CD8-positive, alpha-beta T cell (primary cell): ENCODE measurements at regions of chr17 and their contacts with region 1.

Region 1: GRCh38 chr17:69819316-69820087 is 255.5 kb upstream of the KCNJ16 start:
- DNase-seq: no peak
- ATAC-seq: no peak
- H3K4me3 ChIP-seq: no peak overlapping the region
- H3K4me3 Mint-ChIP-seq: no peak overlapping the region
- H3K27ac ChIP-seq: no peak overlapping the region
- H3K27ac Mint-ChIP-seq: no peak overlapping the region
- H3K4me1 ChIP-seq: no peaks in the 10 kb centered on the region
- H3K4me1 Mint-ChIP-seq: no peaks in the 10 kb centered on the region
- H3K27me3 ChIP-seq: no peaks in the 10 kb centered on the region
- H3K27me3 Mint-ChIP-seq: peaks cover 1% of the 10 kb centered on the region
- CTCF ChIP-seq: no peak

Region 2: DNA sequence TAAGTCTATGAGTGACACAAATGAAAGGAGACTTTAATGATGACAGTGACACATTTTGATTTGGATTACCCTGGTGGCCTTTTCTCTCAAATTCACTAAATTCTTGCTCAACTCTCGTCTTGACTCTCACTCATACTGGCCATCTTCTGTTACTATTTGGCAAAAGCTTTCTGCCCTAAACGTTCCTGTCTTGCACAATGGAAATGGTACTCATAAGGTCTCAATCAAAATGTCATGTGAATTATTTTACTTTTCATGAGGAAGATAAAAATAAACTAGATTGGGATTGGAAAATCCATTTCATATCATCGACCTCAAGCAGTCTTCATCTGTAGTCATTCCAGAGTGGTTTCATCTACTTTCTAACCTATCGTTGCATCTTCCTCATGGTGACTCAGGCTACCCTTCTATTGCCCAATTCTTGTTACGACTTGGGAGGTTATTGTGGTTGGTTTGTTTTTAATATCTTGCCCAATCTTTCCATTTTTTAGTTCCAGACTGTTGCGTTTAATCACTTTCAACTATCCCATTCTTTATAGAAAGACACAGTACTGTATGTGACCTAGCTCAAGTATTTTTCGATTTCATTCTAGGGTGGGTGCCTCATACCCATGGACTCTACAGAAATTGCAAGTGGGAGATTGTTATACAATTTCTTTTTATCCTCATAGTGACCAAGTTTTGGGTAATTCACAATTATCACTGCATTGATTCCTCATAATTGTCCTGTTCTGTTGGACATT is 61.6 kb before region 1 on chr17:
- CTCF ChIA-PET with region 1: no interaction called
- POLR2A ChIA-PET with region 1: no interaction called
- intact Hi-C with region 1: no loop called
- DNase-seq: no peak
- ATAC-seq: no peak
- H3K4me3 ChIP-seq: no peak overlapping the region
- H3K4me3 Mint-ChIP-seq: no peak overlapping the region
- H3K27ac ChIP-seq: no peak overlapping the region
- H3K27ac Mint-ChIP-seq: no peak overlapping the region
- H3K4me1 ChIP-seq: no peaks in the 10 kb centered on the region
- H3K4me1 Mint-ChIP-seq: no peaks in the 10 kb centered on the region
- H3K27me3 ChIP-seq: no peaks in the 10 kb centered on the region
- H3K27me3 Mint-ChIP-seq: no peaks in the 10 kb centered on the region
- CTCF ChIP-seq: no peak

Region 3: DNA sequence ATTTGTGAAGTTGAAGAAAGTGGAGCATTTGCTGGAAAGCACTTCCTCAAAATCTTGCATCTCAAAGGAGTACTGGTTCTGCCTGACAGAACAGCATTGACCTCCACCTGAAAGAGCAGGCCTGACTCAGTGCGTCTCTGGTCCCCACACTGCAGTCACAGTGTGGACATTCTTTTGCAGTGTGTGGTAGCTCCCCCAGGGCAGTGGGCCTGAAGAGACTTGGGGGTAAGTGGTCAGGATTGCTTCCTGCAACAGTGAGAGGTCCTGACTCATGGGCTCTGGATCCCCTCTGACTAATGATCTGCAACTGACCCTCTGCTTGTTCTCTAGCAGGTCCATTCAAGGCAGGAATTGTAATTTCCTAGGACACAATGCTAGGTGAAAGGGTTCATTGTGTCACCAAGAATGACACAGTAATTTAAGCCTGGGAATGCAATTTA is 50.6 kb after region 1 on chr17:
- CTCF ChIA-PET with region 1: no interaction called
- POLR2A ChIA-PET with region 1: no interaction called
- intact Hi-C with region 1: loop called in 1 of 2 experiments (anchors 10 kb)
- DNase-seq: no peak
- ATAC-seq: no peak
- H3K4me3 ChIP-seq: no peak overlapping the region
- H3K4me3 Mint-ChIP-seq: no peak overlapping the region
- H3K27ac ChIP-seq: no peak overlapping the region
- H3K27ac Mint-ChIP-seq: no peak overlapping the region
- H3K4me1 ChIP-seq: no peaks in the 10 kb centered on the region
- H3K4me1 Mint-ChIP-seq: no peaks in the 10 kb centered on the region
- H3K27me3 ChIP-seq: no peaks in the 10 kb centered on the region
- H3K27me3 Mint-ChIP-seq: no peaks in the 10 kb centered on the region
- CTCF ChIP-seq: no peak